K562 (cell line): ENCODE measurements at regions of chr11 and their contacts with region 1.

Region 1: DNA sequence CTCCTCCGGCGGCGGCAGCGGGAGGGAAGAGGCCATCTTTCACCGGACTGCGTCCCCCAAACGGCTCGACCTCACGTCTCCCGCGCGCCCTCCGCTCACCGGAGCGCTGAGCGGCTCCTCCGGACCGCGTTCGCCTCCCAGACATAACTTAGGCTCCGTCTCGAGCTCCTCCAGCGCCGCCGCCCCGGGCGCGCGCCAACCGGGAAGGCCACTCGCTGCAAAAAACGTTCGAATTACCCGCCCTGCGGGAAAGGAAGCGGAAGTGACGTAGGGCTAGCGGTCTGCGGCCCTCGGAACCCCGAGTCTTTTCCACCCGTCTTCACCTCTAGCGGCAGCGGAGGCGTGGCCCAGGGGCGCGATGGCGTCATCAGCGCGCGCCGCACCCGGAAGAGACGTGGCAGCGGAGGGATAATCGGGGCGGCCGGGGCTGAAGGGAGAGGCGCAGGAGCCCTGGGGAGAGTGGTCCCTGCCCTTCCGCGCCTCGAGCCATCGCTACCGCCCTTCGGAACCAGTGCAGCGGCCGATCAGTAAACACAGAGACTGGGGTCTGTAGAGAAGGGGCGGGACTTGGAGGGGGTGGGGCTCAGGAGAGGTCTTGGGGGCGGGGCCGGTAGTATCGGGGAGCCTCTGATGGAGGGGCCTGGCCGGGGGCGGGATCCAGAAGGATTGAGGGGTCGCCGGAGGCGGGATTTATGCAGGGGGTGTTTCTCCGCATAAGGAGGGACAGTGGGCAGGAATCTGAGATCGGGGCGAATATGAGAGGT is at the starts of genes CDCA5 and ZFPL1:
- DNase-seq: peak; percentile 97 to 98 (median 97)
- ATAC-seq: peak; percentile 93
- H3K4me3 ChIP-seq: peak within 1 kb of the TSS; percentile 81
- H3K27ac ChIP-seq: peak within 1 kb of the TSS; percentile 90
- H3K4me1 ChIP-seq: peaks cover 20 to 22% of the 10 kb centered on the region in 2 experiments
- H3K27me3 ChIP-seq: no peaks in the 10 kb centered on the region; a peak in 1 of 5 replicates
- CTCF ChIP-seq: no peak; a peak in 1 of 6 replicates
- EP300 ChIP-seq: peak; percentile 55
- POLR2A ChIP-seq: peak; percentile 93
- RAD21 ChIP-seq: no peak
- polyA plus RNA-seq, gene CDCA5: 18.9 to 25.5 TPM
- polyA plus RNA-seq, gene ZFPL1: 3.7 to 7.1 TPM

Region 2: GRCh38 chr11:65027213-65028067 is 56.6 kb before region 1 on chr11 and contains the start of gene SNX15:
- CTCF ChIA-PET with region 1: no interaction called
- POLR2A ChIA-PET with region 1: interaction called, 7 read pairs
- in situ Hi-C with region 1: no loop called
- intact Hi-C with region 1: loop called (anchors 5 kb)
- DNase-seq: peak; percentile 89 to 98 (median 92)
- ATAC-seq: peak; percentile 98
- H3K4me3 ChIP-seq: peak within 1 kb of the TSS; percentile 55
- H3K27ac ChIP-seq: peak within 1 kb of the TSS; percentile 84
- H3K4me1 ChIP-seq: peaks cover 16 to 29% of the 10 kb centered on the region in 2 experiments; a peak in 4 of 5 replicates
- H3K27me3 ChIP-seq: no peaks in the 10 kb centered on the region
- CTCF ChIP-seq: peak; percentile 53 to 76 (median 69)
- EP300 ChIP-seq: peak; percentile 23; the same call in 1 of the 2 replicates
- POLR2A ChIP-seq: peak; percentile 75
- RAD21 ChIP-seq: peak; percentile 30 to 35; a peak in 3 of 4 replicates
- polyA plus RNA-seq, gene SNX15: 1.8 to 2.8 TPM

Region 3: GRCh38 chr11:65072631-65072966 is 11.4 kb before region 1 on chr11:
- CTCF ChIA-PET with region 1: no interaction called
- POLR2A ChIA-PET with region 1: interaction called, 11 read pairs
- in situ Hi-C with region 1: no loop called
- intact Hi-C with region 1: no loop called
- DNase-seq: no peak
- ATAC-seq: no peak
- H3K4me3 ChIP-seq: no peak overlapping the region
- H3K27ac ChIP-seq: no peak overlapping the region
- H3K4me1 ChIP-seq: peaks cover 1 to 3% of the 10 kb centered on the region in 2 experiments; a peak in 3 of 5 replicates
- H3K27me3 ChIP-seq: no peaks in the 10 kb centered on the region
- CTCF ChIP-seq: no peak
- EP300 ChIP-seq: no peak
- POLR2A ChIP-seq: no peak
- RAD21 ChIP-seq: no peak

Region 4: GRCh38 chr11:65329944-65330403 is 246.0 kb after region 1 on chr11:
- CTCF ChIA-PET with region 1: no interaction called
- POLR2A ChIA-PET with region 1: no interaction called
- in situ Hi-C with region 1: no loop called
- intact Hi-C with region 1: no loop called
- DNase-seq: peak; percentile 52 to 96 (median 64)
- ATAC-seq: peak; percentile 65
- H3K4me3 ChIP-seq: no peak overlapping the region
- H3K27ac ChIP-seq: no peak overlapping the region; the same call in 1 of the 3 replicates
- H3K4me1 ChIP-seq: peaks cover 10 to 11% of the 10 kb centered on the region in 2 experiments; a peak in 4 of 5 replicates
- H3K27me3 ChIP-seq: no peaks in the 10 kb centered on the region
- CTCF ChIP-seq: peak; percentile 78 to 82 (median 80)
- EP300 ChIP-seq: no peak
- POLR2A ChIP-seq: no peak
- RAD21 ChIP-seq: peak; percentile 55 to 74

Region 5: DNA sequence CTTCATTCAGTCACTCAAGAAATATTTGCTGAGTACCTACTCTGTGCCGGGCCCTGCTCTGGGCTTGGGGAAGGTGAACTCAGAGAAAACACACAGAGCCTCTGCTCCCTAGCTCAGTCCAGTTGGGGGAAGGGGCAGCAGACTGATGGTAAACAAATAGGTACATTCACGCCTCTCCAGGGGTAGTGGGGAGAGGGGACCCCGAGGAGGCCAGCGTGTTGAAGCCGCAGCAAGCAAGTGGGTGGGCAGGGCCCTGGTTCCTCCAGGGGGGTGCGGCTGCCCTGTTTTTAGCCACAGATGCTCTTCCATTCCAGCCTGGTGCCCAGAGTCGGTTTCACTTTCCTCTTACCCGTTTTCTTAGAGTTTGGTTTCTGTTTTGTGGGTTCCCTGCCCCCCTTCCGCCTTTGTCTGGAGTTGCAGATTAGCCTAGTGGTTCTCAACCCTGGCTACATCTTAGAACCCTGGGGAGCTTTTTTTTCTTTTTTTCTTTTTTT is 843.9 kb after region 1 on chr11:
- CTCF ChIA-PET with region 1: no interaction called
- POLR2A ChIA-PET with region 1: no interaction called
- in situ Hi-C with region 1: no loop called
- intact Hi-C with region 1: no loop called
- DNase-seq: peak; percentile 14 to 64 (median 36)
- ATAC-seq: peak; percentile 52
- H3K4me3 ChIP-seq: no peak overlapping the region; the same call in 1 of the 2 replicates
- H3K27ac ChIP-seq: peak overlapping the region; percentile 47
- H3K4me1 ChIP-seq: peaks cover 23 to 42% of the 10 kb centered on the region in 2 experiments; a peak in 4 of 5 replicates
- H3K27me3 ChIP-seq: no peaks in the 10 kb centered on the region
- CTCF ChIP-seq: no peak
- EP300 ChIP-seq: no peak
- POLR2A ChIP-seq: no peak
- RAD21 ChIP-seq: no peak